HEK293 (cell line): ENCODE measurements at regions of chr4 and their contacts with region 1.

Region 1: GRCh38 chr4:182994171-182994570 is 77.0 kb upstream of the DCTD start:
- H3K4me3 ChIP-seq: no peak overlapping the region
- H3K27ac ChIP-seq: no peak overlapping the region
- H3K4me1 ChIP-seq: no peaks in the 10 kb centered on the region
- CTCF ChIP-seq: no peak

Region 2: DNA sequence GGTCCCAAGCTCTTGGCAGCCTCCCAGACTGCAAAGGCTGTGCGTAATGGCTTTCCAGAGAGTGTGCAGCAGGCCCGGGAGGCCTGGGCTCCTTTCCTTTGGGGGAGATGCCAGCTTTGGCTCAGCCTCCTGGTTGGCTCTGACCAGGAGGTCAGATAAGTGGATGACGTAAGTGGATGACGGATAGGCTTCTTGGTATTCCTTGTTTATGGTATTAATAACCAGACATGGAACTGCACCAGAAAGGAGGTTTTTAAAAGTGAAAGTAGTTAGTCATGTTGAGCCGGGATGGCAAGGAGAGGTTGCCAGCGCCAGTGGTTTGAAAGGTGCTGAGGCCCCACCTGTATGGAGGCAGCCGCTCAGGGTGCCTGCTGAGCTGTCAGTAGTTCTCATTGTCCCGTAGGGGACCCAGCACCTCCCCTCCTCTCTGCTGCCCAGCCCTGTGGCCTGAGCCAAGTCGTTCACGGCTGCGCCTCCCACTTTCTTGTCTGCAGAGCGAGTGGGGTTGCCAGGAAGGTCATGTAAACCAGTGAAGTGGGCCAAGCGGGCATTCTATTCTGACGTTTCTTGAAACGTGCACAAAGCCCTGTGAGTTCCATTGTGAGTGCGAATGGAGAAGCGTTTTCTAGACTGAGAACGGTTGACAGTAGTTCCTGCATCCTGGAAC is 882.2 kb after region 1 on chr4:
- CTCF ChIA-PET with region 1: interaction called, 11 read pairs
- POLR2A ChIA-PET with region 1: no interaction called
- H3K4me3 ChIP-seq: no peak overlapping the region
- H3K27ac ChIP-seq: peak overlapping the region; percentile 78
- H3K4me1 ChIP-seq: peaks cover 13% of the 10 kb centered on the region
- CTCF ChIP-seq: no peak